Endothelial cell of umbilical vein (primary cell): ENCODE measurements at regions of chr4 and their contacts with region 1.

Region 1: DNA sequence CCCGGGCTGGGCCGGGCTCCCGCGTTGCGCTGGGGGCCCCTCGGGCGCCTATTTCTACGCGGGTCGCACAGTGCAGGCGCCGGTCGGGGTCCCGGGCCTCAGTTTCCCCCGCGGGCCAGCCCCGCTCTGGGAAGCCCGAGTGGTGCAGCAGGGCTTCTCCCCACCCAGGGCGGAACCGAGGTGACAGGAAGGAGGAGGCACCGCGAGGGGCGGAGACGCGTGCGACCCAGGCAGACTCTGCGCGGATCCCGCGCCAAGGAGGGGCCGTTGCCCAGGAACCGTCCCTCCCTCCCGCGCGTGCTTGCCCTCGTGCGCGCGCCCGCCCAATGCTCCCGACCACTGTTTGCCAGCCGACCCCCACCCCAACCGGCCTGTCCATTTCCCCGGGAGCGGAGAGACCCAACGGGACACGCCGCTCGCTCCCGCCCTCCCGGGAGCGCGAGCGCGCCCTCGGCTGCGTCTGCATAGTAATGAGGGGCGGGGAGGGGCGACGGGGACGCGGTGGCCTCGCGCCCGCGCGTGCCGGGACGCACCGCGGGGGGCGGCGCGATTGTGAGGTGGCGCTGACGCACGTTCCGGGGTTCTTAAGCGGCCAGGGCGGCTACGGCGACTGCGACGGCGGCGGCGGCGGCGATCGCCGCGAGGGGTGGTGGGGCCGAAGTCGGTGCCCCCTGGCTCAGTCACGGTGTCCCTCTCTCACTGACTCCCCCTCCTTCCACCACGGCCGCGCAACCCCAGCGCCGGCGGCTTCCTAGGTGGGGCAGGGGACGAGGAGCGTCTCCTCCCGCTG is at the start of gene CPEB2:
- DNase-seq: peak; percentile 97
- H3K4me3 ChIP-seq: peak within 1 kb of the TSS; percentile 77 to 93 (median 85)
- H3K27ac ChIP-seq: peak within 1 kb of the TSS; percentile 97
- H3K4me1 ChIP-seq: peaks cover 17% of the 10 kb centered on the region
- H3K27me3 ChIP-seq: no peaks in the 10 kb centered on the region
- CTCF ChIP-seq: no peak
- POLR2A ChIP-seq: peak; percentile 97
- total RNA-seq, gene CPEB2: 11.7 and 14.8 TPM in 2 replicates

Region 2: GRCh38 chr4:13627606-13628301 is 1374.3 kb before region 1 on chr4 and contains the start of gene BOD1L1:
- CTCF ChIA-PET with region 1: no interaction called
- POLR2A ChIA-PET with region 1: no interaction called
- dilution Hi-C with region 1: no loop called
- intact Hi-C with region 1: loop called (anchors 5 kb)
- DNase-seq: peak; percentile 91
- H3K4me3 ChIP-seq: peak within 1 kb of the TSS; percentile 71 to 91 (median 81)
- H3K27ac ChIP-seq: peak within 1 kb of the TSS; percentile 90
- H3K4me1 ChIP-seq: peaks cover 16% of the 10 kb centered on the region
- H3K27me3 ChIP-seq: no peaks in the 10 kb centered on the region
- CTCF ChIP-seq: peak; percentile 42 to 76
- POLR2A ChIP-seq: peak; percentile 98
- total RNA-seq, gene BOD1L1: 27.5 and 31.2 TPM in 2 replicates

Region 3: GRCh38 chr4:14168919-14169318 is 833.1 kb before region 1 on chr4:
- CTCF ChIA-PET with region 1: no interaction called
- POLR2A ChIA-PET with region 1: no interaction called
- dilution Hi-C with region 1: no loop called
- intact Hi-C with region 1: loop called (anchors 10 kb)
- DNase-seq: peak; percentile 93
- H3K4me3 ChIP-seq: no peak overlapping the region
- H3K27ac ChIP-seq: no peak overlapping the region
- H3K4me1 ChIP-seq: peaks cover 19% of the 10 kb centered on the region
- H3K27me3 ChIP-seq: no peaks in the 10 kb centered on the region
- CTCF ChIP-seq: no peak
- POLR2A ChIP-seq: peak; percentile 34

Region 4: GRCh38 chr4:14877246-14878225 is 124.5 kb before region 1 on chr4:
- CTCF ChIA-PET with region 1: no interaction called
- POLR2A ChIA-PET with region 1: no interaction called
- dilution Hi-C with region 1: no loop called
- intact Hi-C with region 1: no loop called
- DNase-seq: no peak
- H3K4me3 ChIP-seq: no peak overlapping the region
- H3K27ac ChIP-seq: no peak overlapping the region
- H3K4me1 ChIP-seq: no peaks in the 10 kb centered on the region
- H3K27me3 ChIP-seq: no peaks in the 10 kb centered on the region
- CTCF ChIP-seq: no peak
- POLR2A ChIP-seq: no peak

Region 5: GRCh38 chr4:15043226-15043625 is 41.2 kb after region 1 on chr4:
- CTCF ChIA-PET with region 1: interaction called, 4 read pairs
- POLR2A ChIA-PET with region 1: no interaction called
- dilution Hi-C with region 1: no loop called
- intact Hi-C with region 1: loop called (anchors 2 kb)
- DNase-seq: no peak
- H3K4me3 ChIP-seq: no peak overlapping the region
- H3K27ac ChIP-seq: peak overlapping the region; percentile 60
- H3K4me1 ChIP-seq: peaks cover 22% of the 10 kb centered on the region
- H3K27me3 ChIP-seq: no peaks in the 10 kb centered on the region
- CTCF ChIP-seq: no peak
- POLR2A ChIP-seq: no peak

Region 6: DNA sequence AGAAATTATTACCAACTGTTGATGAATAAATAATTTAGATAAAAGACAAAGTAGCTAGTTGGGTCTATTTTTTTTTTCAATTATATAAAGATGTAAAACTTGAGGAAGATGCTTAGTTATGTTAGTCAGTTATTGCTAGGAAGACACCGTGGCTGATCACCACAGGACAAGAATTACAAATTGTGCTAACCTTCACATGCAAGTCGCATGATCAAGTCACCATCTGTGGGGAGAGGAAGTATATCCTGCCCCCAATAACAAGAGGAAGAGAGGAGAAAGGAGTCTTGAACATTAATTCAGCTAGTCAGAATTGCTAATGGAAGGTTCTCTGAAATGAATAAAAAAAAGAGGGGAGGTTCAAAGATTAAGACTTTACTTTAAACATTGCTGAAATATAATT is 52.5 kb after region 1 on chr4:
- CTCF ChIA-PET with region 1: no interaction called
- POLR2A ChIA-PET with region 1: no interaction called
- dilution Hi-C with region 1: no loop called
- intact Hi-C with region 1: no loop called
- DNase-seq: no peak
- H3K4me3 ChIP-seq: no peak overlapping the region
- H3K27ac ChIP-seq: no peak overlapping the region
- H3K4me1 ChIP-seq: no peaks in the 10 kb centered on the region
- H3K27me3 ChIP-seq: no peaks in the 10 kb centered on the region
- CTCF ChIP-seq: no peak
- POLR2A ChIP-seq: no peak

Region 7: GRCh38 chr4:15162465-15163283 is 160.6 kb after region 1 on chr4:
- CTCF ChIA-PET with region 1: no interaction called
- POLR2A ChIA-PET with region 1: no interaction called
- dilution Hi-C with region 1: no loop called
- intact Hi-C with region 1: loop called (anchors 2 kb)
- DNase-seq: peak; percentile 16
- H3K4me3 ChIP-seq: no peak overlapping the region
- H3K27ac ChIP-seq: no peak overlapping the region
- H3K4me1 ChIP-seq: no peaks in the 10 kb centered on the region
- H3K27me3 ChIP-seq: peaks cover 0 to 9% of the 10 kb centered on the region in 2 experiments
- CTCF ChIP-seq: peak; percentile 7 to 38
- POLR2A ChIP-seq: no peak

Region 8: GRCh38 chr4:15457406-15458201 is 455.5 kb after region 1 on chr4:
- CTCF ChIA-PET with region 1: no interaction called
- POLR2A ChIA-PET with region 1: no interaction called
- dilution Hi-C with region 1: no loop called
- intact Hi-C with region 1: loop called (anchors 10 kb)
- DNase-seq: peak; percentile 49
- H3K4me3 ChIP-seq: no peak overlapping the region
- H3K27ac ChIP-seq: no peak overlapping the region
- H3K4me1 ChIP-seq: no peaks in the 10 kb centered on the region
- H3K27me3 ChIP-seq: peaks cover 3 to 18% of the 10 kb centered on the region in 2 experiments
- CTCF ChIP-seq: peak; percentile 50 to 54
- POLR2A ChIP-seq: no peak

Region 9: DNA sequence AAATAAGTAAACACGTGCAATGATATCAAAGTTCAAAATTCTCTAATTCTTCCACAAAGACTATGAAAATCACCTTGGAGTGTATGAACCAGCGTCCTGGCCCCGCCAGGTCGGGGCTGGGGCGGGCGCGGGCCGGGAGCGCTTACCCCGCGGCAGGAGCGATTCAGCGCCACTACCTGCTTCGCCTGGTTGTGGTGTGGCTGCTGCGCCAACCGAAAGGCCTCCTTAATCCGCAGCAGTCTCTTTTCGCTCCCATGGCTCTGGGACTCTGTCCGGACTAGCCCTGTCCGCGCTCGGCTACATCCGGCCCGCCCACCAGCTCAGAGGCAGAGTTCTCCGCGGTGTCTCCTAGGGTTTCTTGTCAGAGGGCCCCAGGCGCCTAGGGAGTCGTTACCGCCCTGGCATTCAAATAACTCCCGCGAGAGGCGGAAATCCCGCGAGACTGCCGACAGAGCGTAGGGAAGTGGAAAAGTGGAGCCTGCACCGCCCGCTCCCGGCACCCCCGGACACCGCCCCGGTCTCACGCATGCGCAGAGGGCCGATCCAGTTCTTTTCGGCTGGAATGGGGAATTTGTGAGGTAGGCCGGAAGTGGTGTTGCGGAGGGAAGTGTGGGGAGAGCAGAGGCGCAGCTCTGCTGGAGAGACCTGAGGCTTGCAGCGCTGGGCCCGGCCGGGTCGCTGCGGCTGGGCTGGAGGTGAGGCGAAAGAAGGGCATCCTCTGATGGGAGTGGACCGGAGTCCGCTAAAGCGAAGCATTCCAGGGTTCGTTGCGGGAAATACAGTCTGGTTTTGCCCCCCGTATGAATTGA is 679.3 kb after region 1 on chr4 and contains the start of gene FAM200B:
- CTCF ChIA-PET with region 1: no interaction called
- POLR2A ChIA-PET with region 1: no interaction called
- dilution Hi-C with region 1: no loop called
- intact Hi-C with region 1: loop called (anchors 1 kb)
- DNase-seq: peak; percentile 99
- H3K4me3 ChIP-seq: peak within 1 kb of the TSS; percentile 65 to 99 (median 97)
- H3K27ac ChIP-seq: peak within 1 kb of the TSS; percentile 95
- H3K4me1 ChIP-seq: peaks cover 49% of the 10 kb centered on the region
- H3K27me3 ChIP-seq: no peaks in the 10 kb centered on the region
- CTCF ChIP-seq: peak in 1 of 2 donors; percentile 29
- POLR2A ChIP-seq: peak; percentile 85
- total RNA-seq, gene FAM200B: 20.6 and 24.6 TPM in 2 replicates